ENCODE measurements at regions of chrX and their contacts with region 1.

Region 1: GRCh38 chrX:110359273-110359672 is 625 bp downstream of the RTL9 start:
- DNase-seq: no peak
- H3K4me3 ChIP-seq: no peak overlapping the region
- H3K27ac ChIP-seq: no peak overlapping the region
- H3K4me1 ChIP-seq: no peaks in the 10 kb centered on the region
- H3K27me3 ChIP-seq: no peaks in the 10 kb centered on the region
- CTCF ChIP-seq: no peak
- EP300 ChIP-seq: no peak
- POLR2A ChIP-seq: no peak

Region 2: DNA sequence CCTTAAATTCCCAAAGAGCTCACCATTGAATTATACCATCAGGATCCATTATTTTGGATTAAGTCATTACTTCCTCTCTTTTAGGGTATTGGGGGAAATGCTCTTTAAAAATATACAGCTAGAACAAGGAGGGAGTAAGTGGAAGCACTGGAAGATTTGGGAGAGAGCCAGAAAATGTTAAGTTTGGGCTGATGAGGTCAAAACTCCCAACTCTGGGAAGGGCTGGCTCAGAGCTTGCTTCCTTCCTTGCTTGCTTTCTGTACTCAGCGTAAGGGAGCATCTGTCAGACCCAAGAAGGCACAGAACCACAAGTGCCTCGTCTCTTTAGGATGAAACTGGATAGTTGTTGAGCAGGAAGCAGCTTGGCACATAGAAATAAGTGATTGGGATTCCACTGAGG is 1015.6 kb before region 1 on chrX:
- in situ Hi-C with region 1: no loop called
- intact Hi-C with region 1: loop called (anchors 5 kb)
- DNase-seq: no peak
- H3K4me3 ChIP-seq: no peak overlapping the region
- H3K27ac ChIP-seq: no peak overlapping the region
- H3K4me1 ChIP-seq: no peaks in the 10 kb centered on the region
- H3K27me3 ChIP-seq: no peaks in the 10 kb centered on the region
- CTCF ChIP-seq: no peak
- EP300 ChIP-seq: no peak
- POLR2A ChIP-seq: no peak

Region 3: GRCh38 chrX:110420771-110421499 is 61.7 kb after region 1 on chrX:
- in situ Hi-C with region 1: no loop called
- intact Hi-C with region 1: no loop called
- DNase-seq: no peak
- H3K4me3 ChIP-seq: no peak overlapping the region
- H3K27ac ChIP-seq: no peak overlapping the region
- H3K4me1 ChIP-seq: no peaks in the 10 kb centered on the region
- H3K27me3 ChIP-seq: no peaks in the 10 kb centered on the region
- CTCF ChIP-seq: no peak
- EP300 ChIP-seq: no peak
- POLR2A ChIP-seq: no peak